CD14-positive monocyte (primary cell): ENCODE measurements at regions of chr1 and their contacts with region 1.

Region 1: DNA sequence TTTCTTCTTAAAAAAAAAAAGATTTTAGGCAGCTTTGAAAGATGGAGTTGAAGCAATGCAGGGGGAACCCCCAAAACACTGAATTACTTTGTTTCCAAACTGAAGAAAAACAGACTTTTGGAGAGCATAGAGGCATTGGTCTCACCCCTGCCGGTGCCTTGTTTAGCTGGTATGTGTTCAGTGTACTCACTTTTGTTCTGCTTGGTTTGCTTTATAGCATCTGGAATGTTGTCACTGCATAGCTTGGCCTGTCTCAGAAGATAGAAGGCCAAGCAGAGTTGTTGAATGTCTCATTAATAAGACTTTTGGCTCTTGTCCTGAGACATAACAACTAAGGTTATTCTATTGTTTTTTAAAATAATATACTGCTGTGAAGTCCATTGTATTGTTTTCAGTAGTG is 6.9 kb downstream of the THRAP3 start:
- DNase-seq: no peak
- H3K4me3 ChIP-seq: no peak overlapping the region
- H3K4me3 Mint-ChIP-seq: no peak overlapping the region
- H3K27ac ChIP-seq: peak overlapping the region in 1 of 2 donors; percentile 53
- H3K27ac Mint-ChIP-seq: peak overlapping the region in 3 of 7 donors; percentile 6 to 30 (median 10)
- H3K4me1 ChIP-seq: peaks cover 1 to 18% of the 10 kb centered on the region in 2 donors
- H3K4me1 Mint-ChIP-seq: peaks cover 18% of the 10 kb centered on the region
- H3K27me3 ChIP-seq: no peaks in the 10 kb centered on the region
- H3K27me3 Mint-ChIP-seq: no peaks in the 10 kb centered on the region
- CTCF ChIP-seq: no peak

Region 2: GRCh38 chr1:36149237-36149972 is 81.8 kb before region 1 on chr1 and contains the start of gene TRAPPC3:
- intact Hi-C with region 1: no loop called
- DNase-seq: peak; percentile 100
- H3K4me3 ChIP-seq: peak within 1 kb of the TSS; percentile 87 to 91 (median 87)
- H3K4me3 Mint-ChIP-seq: peak within 1 kb of the TSS; percentile 93 to 98
- H3K27ac ChIP-seq: peak within 1 kb of the TSS; percentile 100
- H3K27ac Mint-ChIP-seq: peak within 1 kb of the TSS; percentile 98 to 100 (median 99)
- H3K4me1 ChIP-seq: peaks cover 47 to 58% of the 10 kb centered on the region in 2 donors
- H3K4me1 Mint-ChIP-seq: peaks cover 59% of the 10 kb centered on the region
- H3K27me3 ChIP-seq: no peaks in the 10 kb centered on the region
- H3K27me3 Mint-ChIP-seq: peaks cover 0 to 2% (median 0%) of the 10 kb centered on the region in 3 donors
- CTCF ChIP-seq: peak; percentile 82
- polyA plus RNA-seq, gene TRAPPC3: 61.1 to 136 (median 125) TPM

Region 3: DNA sequence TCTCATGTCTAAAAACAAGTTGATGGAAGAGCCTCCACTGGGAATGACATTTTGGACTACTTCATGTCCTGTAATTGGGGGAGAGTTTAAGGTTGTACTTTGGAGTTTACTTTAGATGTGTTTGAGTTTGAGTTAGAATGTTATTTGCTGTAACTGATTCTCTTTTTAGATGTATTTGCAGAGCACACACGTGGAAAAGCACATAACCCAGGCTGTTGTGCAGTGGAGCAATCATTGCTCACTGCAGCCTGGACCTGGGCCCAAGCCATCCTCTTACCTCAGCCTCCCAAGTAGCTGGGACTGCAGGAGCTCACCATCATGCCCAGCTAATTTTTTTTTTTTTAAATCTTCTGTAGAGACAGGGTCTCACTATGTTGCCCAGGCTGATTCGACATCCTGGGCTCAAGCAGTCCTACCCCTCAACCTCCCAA is 38.2 kb after region 1 on chr1:
- intact Hi-C with region 1: loop called in 1 of 2 experiments (anchors 5 kb)
- DNase-seq: no peak
- H3K4me3 ChIP-seq: no peak overlapping the region
- H3K4me3 Mint-ChIP-seq: no peak overlapping the region
- H3K27ac ChIP-seq: no peak overlapping the region
- H3K27ac Mint-ChIP-seq: peak overlapping the region in 1 of 7 donors; percentile 55
- H3K4me1 ChIP-seq: no peaks in the 10 kb centered on the region
- H3K4me1 Mint-ChIP-seq: peaks cover 7% of the 10 kb centered on the region
- H3K27me3 ChIP-seq: no peaks in the 10 kb centered on the region
- H3K27me3 Mint-ChIP-seq: no peaks in the 10 kb centered on the region
- CTCF ChIP-seq: no peak